CD4-positive, alpha-beta memory T cell (primary cell): ENCODE measurements at regions of chrX and their contacts with region 1.

Region 1: GRCh38 chrX:107894038-107894437 is 68.4 kb downstream of the MID2 start:
- DNase-seq: peak; percentile 25 to 69 (median 65)
- H3K4me3 ChIP-seq: no peak overlapping the region
- H3K4me3 Mint-ChIP-seq: no peak overlapping the region
- H3K27ac ChIP-seq: no peak overlapping the region
- H3K27ac Mint-ChIP-seq: peak overlapping the region in 2 of 7 donors; percentile 32 to 76
- H3K4me1 ChIP-seq: no peaks in the 10 kb centered on the region
- H3K4me1 Mint-ChIP-seq: peaks cover 2 to 10% (median 3%) of the 10 kb centered on the region in 4 donors
- H3K27me3 ChIP-seq: no peaks in the 10 kb centered on the region
- H3K27me3 Mint-ChIP-seq: no peaks in the 10 kb centered on the region

Region 2: GRCh38 chrX:106874075-106874474 is 1020.0 kb before region 1 on chrX:
- CTCF ChIA-PET with region 1: interaction called, 11 read pairs
- POLR2A ChIA-PET with region 1: no interaction called
- intact Hi-C with region 1: no loop called
- DNase-seq: peak in 4 of 5 donors; percentile 17 to 26 (median 24)
- H3K4me3 ChIP-seq: no peak overlapping the region
- H3K4me3 Mint-ChIP-seq: no peak overlapping the region
- H3K27ac ChIP-seq: no peak overlapping the region
- H3K27ac Mint-ChIP-seq: no peak overlapping the region
- H3K4me1 ChIP-seq: no peaks in the 10 kb centered on the region
- H3K4me1 Mint-ChIP-seq: no peaks in the 10 kb centered on the region
- H3K27me3 ChIP-seq: no peaks in the 10 kb centered on the region
- H3K27me3 Mint-ChIP-seq: peaks cover under 1 to 3% of the 10 kb centered on the region in 2 donors

Region 3: DNA sequence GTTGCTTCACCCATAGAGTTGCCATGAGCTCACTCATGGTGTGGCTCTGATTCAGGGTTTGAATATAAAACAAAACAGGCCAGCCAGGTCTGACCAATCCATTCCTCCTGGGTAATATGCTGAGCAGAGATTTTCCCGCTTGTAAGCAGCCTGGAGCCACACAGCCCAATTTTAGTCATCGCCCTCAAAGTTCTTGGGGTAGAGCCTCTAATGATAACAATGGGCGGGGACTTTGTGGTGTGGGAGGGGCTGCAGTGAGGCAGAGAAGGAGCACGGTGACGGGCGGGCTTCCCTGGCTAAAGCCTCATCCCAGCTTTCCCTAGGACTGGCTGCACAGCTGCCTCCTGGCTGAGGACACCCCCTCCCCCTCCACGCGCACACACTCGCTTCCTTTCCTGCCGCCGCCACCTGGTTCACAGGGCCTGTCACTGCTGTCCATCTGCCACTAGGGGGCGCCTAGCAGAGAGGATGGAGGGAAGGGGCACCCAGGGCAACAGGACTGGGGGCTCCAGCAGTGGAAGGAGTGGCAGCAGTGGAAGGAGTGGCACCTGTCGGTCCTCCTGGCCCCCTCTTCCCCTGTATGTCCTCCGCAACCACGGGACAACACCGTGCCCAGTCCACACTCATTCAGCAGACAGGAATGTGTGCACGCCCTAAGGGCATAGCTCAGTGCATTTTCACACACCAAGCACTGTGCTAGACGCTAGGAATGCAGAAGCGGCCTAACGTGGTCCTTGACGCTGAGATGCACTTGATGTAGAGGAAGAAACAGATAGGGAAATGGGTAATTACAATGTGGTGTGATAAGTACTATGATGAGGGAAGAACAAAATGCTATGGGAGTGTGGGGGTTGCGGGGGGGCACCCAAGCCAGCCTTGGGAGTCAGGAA is 238.9 kb before region 1 on chrX:
- CTCF ChIA-PET with region 1: interaction called, 4 read pairs
- POLR2A ChIA-PET with region 1: no interaction called
- intact Hi-C with region 1: loop called (anchors 1 kb)
- DNase-seq: peak; percentile 64 to 71 (median 67)
- H3K4me3 ChIP-seq: no peak overlapping the region
- H3K4me3 Mint-ChIP-seq: peak overlapping the region in 2 of 8 donors; percentile 2 to 9
- H3K27ac ChIP-seq: no peak overlapping the region
- H3K27ac Mint-ChIP-seq: peak overlapping the region in 5 of 7 donors; percentile 47 to 82 (median 57)
- H3K4me1 ChIP-seq: peaks cover 12% of the 10 kb centered on the region
- H3K4me1 Mint-ChIP-seq: peaks cover 11 to 15% (median 14%) of the 10 kb centered on the region in 4 donors
- H3K27me3 ChIP-seq: no peaks in the 10 kb centered on the region
- H3K27me3 Mint-ChIP-seq: no peaks in the 10 kb centered on the region